CD8-positive, alpha-beta T cell (primary cell): ENCODE measurements at regions of chr5 and their contacts with region 1.

Region 1: GRCh38 chr5:6712577-6713275 is 506 bp upstream of the TENT4A start:
- DNase-seq: peak in 8 of 9 experiments; percentile 95 to 99 (median 96)
- ATAC-seq: peak; percentile 76
- H3K4me3 ChIP-seq: peak overlapping the region; percentile 83 to 91
- H3K4me3 Mint-ChIP-seq: peak overlapping the region; percentile 89
- H3K27ac ChIP-seq: peak overlapping the region; percentile 77 to 86
- H3K27ac Mint-ChIP-seq: peak overlapping the region; percentile 92
- H3K4me1 ChIP-seq: peaks cover 28% of the 10 kb centered on the region
- H3K4me1 Mint-ChIP-seq: peaks cover 39% of the 10 kb centered on the region
- H3K27me3 ChIP-seq: peaks cover 0 to 2% of the 10 kb centered on the region in 2 experiments
- H3K27me3 Mint-ChIP-seq: no peaks in the 10 kb centered on the region
- CTCF ChIP-seq: no peak

Region 2: GRCh38 chr5:6632917-6633468 is 79.7 kb before region 1 on chr5 and contains the starts of genes NSUN2 and SRD5A1:
- CTCF ChIA-PET with region 1: interaction called, 3 read pairs
- POLR2A ChIA-PET with region 1: interaction called, 20 read pairs
- intact Hi-C with region 1: loop called (anchors 1 kb)
- DNase-seq: peak; percentile 81 to 98 (median 90)
- ATAC-seq: peak; percentile 89
- H3K4me3 ChIP-seq: peak within 1 kb of the TSS; percentile 75 to 83
- H3K4me3 Mint-ChIP-seq: peak within 1 kb of the TSS; percentile 85
- H3K27ac ChIP-seq: peak within 1 kb of the TSS; percentile 92 to 100
- H3K27ac Mint-ChIP-seq: peak within 1 kb of the TSS; percentile 99
- H3K4me1 ChIP-seq: peaks cover 22% of the 10 kb centered on the region
- H3K4me1 Mint-ChIP-seq: peaks cover 52% of the 10 kb centered on the region
- H3K27me3 ChIP-seq: no peaks in the 10 kb centered on the region
- H3K27me3 Mint-ChIP-seq: no peaks in the 10 kb centered on the region
- CTCF ChIP-seq: no peak
- total RNA-seq, gene NSUN2: 69.6 to 74.3 TPM
- total RNA-seq, gene SRD5A1: 2.1 to 2.8 TPM

Region 3: DNA sequence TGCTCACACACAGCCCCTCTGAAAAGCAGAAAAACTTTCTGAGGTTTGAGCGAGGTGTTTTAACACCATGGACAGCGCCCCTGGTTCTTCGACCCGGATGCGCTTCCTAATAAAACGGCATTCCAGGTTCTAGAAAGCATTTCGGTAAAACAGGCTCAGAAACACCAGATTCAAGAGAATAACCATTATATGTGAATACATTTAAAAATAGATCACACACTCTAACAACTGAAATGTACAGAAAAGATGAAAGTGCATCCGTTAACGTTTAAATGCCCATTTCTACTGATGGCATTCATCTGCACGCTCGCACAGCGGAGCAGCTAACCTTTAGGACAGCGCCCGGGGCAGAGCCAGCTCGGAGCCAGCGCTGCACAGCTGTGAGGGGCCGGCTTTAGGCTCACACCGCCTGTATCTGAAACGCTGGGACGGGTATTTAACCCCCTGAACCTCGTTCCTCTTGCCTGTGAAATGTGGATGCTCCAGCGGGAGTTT is 25.8 kb before region 1 on chr5:
- CTCF ChIA-PET with region 1: no interaction called
- POLR2A ChIA-PET with region 1: no interaction called
- intact Hi-C with region 1: no loop called
- DNase-seq: peak in 2 of 9 experiments; percentile 29 to 37
- ATAC-seq: peak; percentile 42
- H3K4me3 ChIP-seq: no peak overlapping the region
- H3K4me3 Mint-ChIP-seq: peak overlapping the region; percentile 22
- H3K27ac ChIP-seq: no peak overlapping the region
- H3K27ac Mint-ChIP-seq: no peak overlapping the region
- H3K4me1 ChIP-seq: peaks cover 6% of the 10 kb centered on the region
- H3K4me1 Mint-ChIP-seq: peaks cover 9% of the 10 kb centered on the region
- H3K27me3 ChIP-seq: peaks cover 4 to 11% of the 10 kb centered on the region in 2 experiments
- H3K27me3 Mint-ChIP-seq: peaks cover 47% of the 10 kb centered on the region
- CTCF ChIP-seq: no peak

Region 4: GRCh38 chr5:6728011-6728794 is 15.5 kb after region 1 on chr5:
- CTCF ChIA-PET with region 1: interaction called, 14 read pairs
- POLR2A ChIA-PET with region 1: interaction called, 4 read pairs
- intact Hi-C with region 1: loop called in 1 of 2 experiments (anchors 1 kb)
- DNase-seq: no peak
- ATAC-seq: no peak
- H3K4me3 ChIP-seq: no peak overlapping the region
- H3K4me3 Mint-ChIP-seq: no peak overlapping the region
- H3K27ac ChIP-seq: no peak overlapping the region
- H3K27ac Mint-ChIP-seq: peak overlapping the region; percentile 78
- H3K4me1 ChIP-seq: peaks cover 56% of the 10 kb centered on the region
- H3K4me1 Mint-ChIP-seq: peaks cover 85% of the 10 kb centered on the region
- H3K27me3 ChIP-seq: no peaks in the 10 kb centered on the region
- H3K27me3 Mint-ChIP-seq: no peaks in the 10 kb centered on the region
- CTCF ChIP-seq: no peak

Region 5: DNA sequence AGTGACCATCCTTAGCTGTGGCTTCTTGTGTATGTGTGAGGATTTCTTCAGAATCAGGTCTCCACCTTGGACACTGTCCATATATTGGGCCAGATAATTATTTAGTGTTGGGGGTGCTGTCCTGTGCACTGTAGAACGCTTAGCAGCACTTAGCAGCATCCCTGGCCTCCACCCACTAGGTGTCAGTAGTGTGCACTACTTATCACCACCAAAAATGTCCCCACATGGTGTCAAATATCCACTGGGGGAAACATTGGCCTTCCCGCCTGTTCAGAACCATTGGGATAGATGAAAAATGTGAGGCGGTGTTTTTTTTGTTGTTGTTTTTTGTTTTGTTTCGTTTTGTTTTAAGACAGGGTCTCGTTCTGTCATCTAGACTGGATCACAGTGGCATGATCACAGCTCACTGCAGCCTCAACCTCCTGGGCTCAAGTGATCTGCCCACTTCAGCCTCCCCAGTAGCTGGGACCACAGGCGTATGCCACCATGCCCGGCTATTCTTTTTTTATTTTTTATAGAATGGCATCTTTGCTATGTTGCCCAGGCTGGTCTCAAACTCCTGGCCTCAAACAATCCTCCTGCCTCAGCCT is 68.2 kb after region 1 on chr5:
- CTCF ChIA-PET with region 1: no interaction called
- POLR2A ChIA-PET with region 1: no interaction called
- intact Hi-C with region 1: no loop called
- DNase-seq: peak in 2 of 9 experiments; percentile 34 to 38
- ATAC-seq: no peak
- H3K4me3 ChIP-seq: no peak overlapping the region
- H3K4me3 Mint-ChIP-seq: no peak overlapping the region
- H3K27ac ChIP-seq: no peak overlapping the region
- H3K27ac Mint-ChIP-seq: no peak overlapping the region
- H3K4me1 ChIP-seq: no peaks in the 10 kb centered on the region
- H3K4me1 Mint-ChIP-seq: no peaks in the 10 kb centered on the region
- H3K27me3 ChIP-seq: peaks cover 0 to 5% of the 10 kb centered on the region in 2 experiments
- H3K27me3 Mint-ChIP-seq: peaks cover 10% of the 10 kb centered on the region
- CTCF ChIP-seq: no peak

Region 6: DNA sequence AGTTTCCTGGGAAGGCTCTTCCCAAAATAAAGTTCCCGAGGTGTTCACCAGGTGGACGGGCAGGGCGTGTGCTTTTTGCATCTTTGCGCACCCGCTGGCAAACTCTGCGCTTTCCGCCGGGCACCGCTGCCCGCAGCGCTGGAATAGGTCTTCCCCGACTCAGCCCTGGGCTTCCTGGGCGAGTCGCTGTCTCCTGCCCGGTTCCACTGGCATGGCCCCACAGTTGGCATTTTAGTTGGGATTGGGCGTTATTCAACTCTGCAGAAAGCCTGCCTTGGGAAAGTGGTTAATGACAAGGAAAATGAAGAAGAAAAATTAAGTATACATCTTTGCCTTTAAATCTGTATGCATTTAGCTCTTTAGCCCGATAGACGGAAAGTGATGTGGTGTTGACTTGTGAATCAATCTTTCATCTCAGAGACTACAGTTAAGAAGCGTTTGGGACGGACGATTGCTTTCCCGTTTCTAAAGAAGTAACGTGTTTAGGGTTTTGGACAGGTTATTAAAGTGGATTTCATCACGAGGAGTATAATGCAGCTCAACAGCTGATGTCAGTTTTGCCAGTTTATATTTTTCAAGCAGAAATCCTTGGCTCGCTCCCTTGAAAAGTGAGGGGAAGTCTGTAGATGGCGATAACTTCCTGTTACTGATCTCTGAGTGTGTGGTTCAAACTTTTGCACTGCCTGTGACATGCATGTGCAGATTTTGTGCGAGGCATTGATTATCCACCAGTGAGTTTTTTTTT is 684.2 kb after region 1 on chr5:
- CTCF ChIA-PET with region 1: no interaction called
- POLR2A ChIA-PET with region 1: no interaction called
- intact Hi-C with region 1: no loop called
- DNase-seq: no peak
- ATAC-seq: no peak
- H3K4me3 ChIP-seq: no peak overlapping the region
- H3K4me3 Mint-ChIP-seq: no peak overlapping the region
- H3K27ac ChIP-seq: no peak overlapping the region
- H3K27ac Mint-ChIP-seq: no peak overlapping the region
- H3K4me1 ChIP-seq: no peaks in the 10 kb centered on the region
- H3K4me1 Mint-ChIP-seq: no peaks in the 10 kb centered on the region
- H3K27me3 ChIP-seq: peaks cover 3 to 12% of the 10 kb centered on the region in 2 experiments
- H3K27me3 Mint-ChIP-seq: peaks cover 23% of the 10 kb centered on the region
- CTCF ChIP-seq: no peak